Activated T-helper 1 cell treated with anti-CD3 and anti-CD28 coated beads, Interleukin-12 subunit alpha, Interleukin-12 subunit beta, Interleukin-2, Interleukin-4 antibody, amounts not matched to agents 30 ng/mL and 10 ng/mL and 1 ng/mL, durations not matched to agents 14 hours and 24 hours and 36 hours (primary cell): ENCODE measurements at regions of chr2 and their contacts with region 1.

Region 1: GRCh38 chr2:181715033-181715630 is 34.8 kb upstream of the NEUROD1 start:
- DNase-seq: peak; percentile 45
- H3K4me3 Mint-ChIP-seq: no peak overlapping the region
- H3K27ac Mint-ChIP-seq: no peak overlapping the region
- H3K4me1 Mint-ChIP-seq: no peaks in the 10 kb centered on the region
- H3K27me3 Mint-ChIP-seq: peaks cover 5% of the 10 kb centered on the region

Region 2: GRCh38 chr2:180125245-180125962 is 1589.7 kb before region 1 on chr2:
- intact Hi-C with region 1: loop called (anchors 2 kb)
- DNase-seq: peak; percentile 6
- H3K4me3 Mint-ChIP-seq: no peak overlapping the region
- H3K27ac Mint-ChIP-seq: no peak overlapping the region
- H3K4me1 Mint-ChIP-seq: no peaks in the 10 kb centered on the region
- H3K27me3 Mint-ChIP-seq: peaks cover 11% of the 10 kb centered on the region

Region 3: DNA sequence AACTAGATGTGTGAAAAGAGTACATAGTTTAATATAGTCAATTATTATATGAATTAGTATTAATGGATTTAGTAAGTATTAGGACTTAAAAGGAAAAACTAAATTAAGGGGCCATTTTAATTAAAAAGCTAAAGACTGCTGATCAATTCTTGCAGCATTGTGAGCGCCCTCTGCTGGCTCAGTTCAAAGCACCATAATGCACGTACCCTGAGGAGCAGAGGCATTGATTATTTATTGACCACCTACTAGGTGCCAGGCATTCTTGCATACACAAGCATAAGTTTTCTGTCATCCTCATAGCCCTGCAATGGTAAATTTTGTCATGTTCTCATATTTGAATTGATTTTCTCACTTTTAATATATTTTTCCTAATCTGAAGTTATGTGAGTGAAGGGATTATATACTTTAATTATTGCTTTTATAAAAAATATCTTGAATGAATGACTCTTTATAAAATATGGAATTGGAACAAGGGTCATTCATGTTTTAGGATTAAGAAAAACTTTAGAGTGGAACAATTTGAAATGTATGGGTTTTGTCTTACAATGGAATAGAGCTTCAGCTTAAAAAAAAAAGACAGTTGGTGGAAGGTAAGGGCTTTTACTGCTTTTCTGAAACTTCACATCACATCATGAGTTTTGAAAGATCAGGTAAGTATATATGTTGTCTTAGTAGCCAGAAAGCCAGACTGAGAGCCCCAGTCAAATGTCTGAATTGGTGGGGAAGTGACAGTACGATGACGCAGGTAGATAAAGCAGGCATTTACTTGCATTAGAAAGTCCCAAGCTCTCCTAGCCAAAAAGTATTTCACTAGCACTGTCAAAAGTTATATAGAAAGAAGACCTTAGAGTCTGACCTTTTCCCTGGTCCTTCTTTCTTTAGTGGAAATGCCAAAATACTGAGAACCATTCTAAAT is 248.2 kb before region 1 on chr2:
- intact Hi-C with region 1: loop called (anchors 2 kb)
- DNase-seq: peak; percentile 56
- H3K4me3 Mint-ChIP-seq: no peak overlapping the region
- H3K27ac Mint-ChIP-seq: peak overlapping the region; percentile 30
- H3K4me1 Mint-ChIP-seq: peaks cover 87% of the 10 kb centered on the region
- H3K27me3 Mint-ChIP-seq: no peaks in the 10 kb centered on the region

Region 4: GRCh38 chr2:181573140-181573736 is 141.9 kb before region 1 on chr2:
- intact Hi-C with region 1: loop called (anchors 1 kb)
- DNase-seq: no peak
- H3K4me3 Mint-ChIP-seq: no peak overlapping the region
- H3K27ac Mint-ChIP-seq: no peak overlapping the region
- H3K4me1 Mint-ChIP-seq: peaks cover 11% of the 10 kb centered on the region
- H3K27me3 Mint-ChIP-seq: peaks cover 11% of the 10 kb centered on the region

Region 5: GRCh38 chr2:181752301-181752700 is 37.2 kb after region 1 on chr2:
- intact Hi-C with region 1: no loop called
- DNase-seq: no peak
- H3K4me3 Mint-ChIP-seq: no peak overlapping the region
- H3K27ac Mint-ChIP-seq: no peak overlapping the region
- H3K4me1 Mint-ChIP-seq: no peaks in the 10 kb centered on the region
- H3K27me3 Mint-ChIP-seq: peaks cover 18% of the 10 kb centered on the region